GM10248 (cell line): ENCODE measurements at regions of chr15 and their contacts with region 1.

Region 1: DNA sequence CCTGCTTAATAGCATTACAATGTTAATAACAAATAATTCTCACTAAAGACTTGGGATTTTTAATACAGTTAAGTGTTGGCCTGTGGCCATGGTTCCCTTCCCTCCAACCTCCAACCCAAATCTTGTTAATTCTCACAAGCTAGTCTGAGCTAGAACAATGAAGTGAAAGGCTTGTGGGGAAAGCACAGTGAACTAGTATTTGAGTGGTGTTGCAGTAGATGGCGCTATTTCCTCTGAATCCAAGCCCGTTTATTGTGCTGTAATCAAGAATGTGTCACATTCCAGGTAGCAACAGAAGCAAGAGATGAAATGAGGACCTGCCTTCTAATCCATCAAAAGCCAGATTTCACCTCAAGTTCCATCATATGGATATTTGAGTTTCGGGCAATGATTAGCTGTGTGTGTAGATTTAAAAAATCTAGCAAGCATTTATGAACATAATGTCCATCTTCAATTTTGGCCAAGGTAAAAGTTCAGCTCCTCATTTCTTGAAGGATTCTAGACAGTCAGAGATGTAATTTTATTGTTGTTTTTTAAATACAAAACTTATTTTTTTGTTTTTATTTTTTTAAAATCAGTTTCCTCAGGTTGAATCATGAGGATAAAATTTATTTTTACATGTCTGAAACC is 160.7 kb downstream of the SQOR start:
- DNase-seq: no peak
- CTCF ChIP-seq: peak; percentile 41

Region 2: GRCh38 chr15:45780352-45780751 is 15.2 kb before region 1 on chr15:
- CTCF ChIA-PET with region 1: interaction called, 11 read pairs
- POLR2A ChIA-PET with region 1: no interaction called
- DNase-seq: no peak
- CTCF ChIP-seq: no peak